Right ventricle myocardium inferior (tissue), 1 donor: ENCODE measurements at regions of chr15 and their contacts with region 1.

Region 1: GRCh38 chr15:78023865-78024518 is 53.5 kb downstream of the TBC1D2B start:
- DNase-seq: peak; percentile 84
- ATAC-seq: peak; percentile 95

Region 2: GRCh38 chr15:78056714-78057269 is 32.8 kb after region 1 on chr15:
- intact Hi-C with region 1: loop called (anchors 5 kb)
- DNase-seq: no peak
- ATAC-seq: peak; percentile 78